MCF 10A (cell line): ENCODE measurements at regions of chr3 and their contacts with region 1.

Region 1: GRCh38 chr3:15205934-15206661 is at the start of gene CAPN7:
- DNase-seq: peak; percentile 93
- H3K4me3 Mint-ChIP-seq: peak within 1 kb of the TSS; percentile 81
- H3K27ac Mint-ChIP-seq: peak within 1 kb of the TSS; percentile 91
- H3K4me1 Mint-ChIP-seq: peaks cover 13% of the 10 kb centered on the region
- H3K27me3 Mint-ChIP-seq: no peaks in the 10 kb centered on the region
- CTCF ChIP-seq: no peak
- total RNA-seq, gene CAPN7: 48.4 and 55.2 TPM in 2 replicates

Region 2: GRCh38 chr3:15056676-15057404 is 149.3 kb before region 1 on chr3:
- CTCF ChIA-PET with region 1: no interaction called
- POLR2A ChIA-PET with region 1: no interaction called
- intact Hi-C with region 1: no loop called
- DNase-seq: no peak
- H3K4me3 Mint-ChIP-seq: no peak overlapping the region
- H3K27ac Mint-ChIP-seq: no peak overlapping the region
- H3K4me1 Mint-ChIP-seq: peaks cover 6% of the 10 kb centered on the region
- H3K27me3 Mint-ChIP-seq: no peaks in the 10 kb centered on the region
- CTCF ChIP-seq: no peak

Region 3: GRCh38 chr3:15098503-15099363 is 107.4 kb before region 1 on chr3 and contains the start of gene RBSN:
- CTCF ChIA-PET with region 1: interaction called, 121 read pairs
- POLR2A ChIA-PET with region 1: interaction called, 47 read pairs
- intact Hi-C with region 1: no loop called
- DNase-seq: peak; percentile 94
- H3K4me3 Mint-ChIP-seq: peak within 1 kb of the TSS; percentile 84
- H3K27ac Mint-ChIP-seq: peak within 1 kb of the TSS; percentile 82
- H3K4me1 Mint-ChIP-seq: peaks cover 30% of the 10 kb centered on the region
- H3K27me3 Mint-ChIP-seq: no peaks in the 10 kb centered on the region
- CTCF ChIP-seq: no peak
- total RNA-seq, gene RBSN: 37.7 and 39.6 TPM in 2 replicates

Region 4: DNA sequence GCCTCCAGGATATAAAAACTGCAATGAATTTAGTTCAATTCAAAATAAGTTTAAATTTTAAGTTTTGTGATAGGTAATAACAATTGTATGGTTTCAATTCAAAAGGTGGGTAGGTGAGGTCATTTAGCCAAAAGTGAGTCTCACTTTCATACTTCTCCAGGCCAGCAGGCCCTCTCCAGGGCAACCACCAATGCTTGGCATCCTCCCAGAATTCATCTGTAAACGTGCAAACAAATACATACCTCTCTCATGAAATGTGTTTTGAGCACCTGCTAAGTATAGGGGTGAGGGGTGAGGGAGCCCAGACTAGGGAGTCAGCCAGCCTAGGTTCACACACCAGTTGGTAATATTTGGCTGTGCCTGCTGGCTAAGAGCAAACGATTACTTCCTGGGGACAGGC is 85.1 kb before region 1 on chr3:
- CTCF ChIA-PET with region 1: interaction called, 77 read pairs
- POLR2A ChIA-PET with region 1: interaction called, 6 read pairs
- intact Hi-C with region 1: no loop called
- DNase-seq: no peak
- H3K4me3 Mint-ChIP-seq: no peak overlapping the region
- H3K27ac Mint-ChIP-seq: no peak overlapping the region
- H3K4me1 Mint-ChIP-seq: no peaks in the 10 kb centered on the region
- H3K27me3 Mint-ChIP-seq: no peaks in the 10 kb centered on the region
- CTCF ChIP-seq: no peak

Region 5: DNA sequence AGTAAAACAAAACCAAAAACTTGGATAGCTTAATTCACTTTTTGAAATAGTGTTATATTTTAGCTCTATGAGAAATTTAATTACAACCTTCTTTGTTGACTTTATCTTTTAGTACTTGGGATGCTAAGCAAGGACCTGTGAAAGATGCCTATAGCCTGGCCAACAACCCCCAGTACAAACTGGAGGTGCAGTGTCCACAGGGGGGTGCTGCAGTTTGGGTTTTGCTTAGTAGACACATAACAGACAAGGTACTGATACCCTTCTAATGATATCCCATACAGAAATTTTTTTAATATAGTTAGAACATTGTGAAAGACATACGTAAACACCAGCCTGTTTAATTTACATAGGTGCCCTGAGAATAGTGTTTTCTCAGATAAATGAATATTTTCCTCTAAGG is 35.2 kb after region 1 on chr3:
- CTCF ChIA-PET with region 1: interaction called, 4 read pairs
- POLR2A ChIA-PET with region 1: interaction called, 13 read pairs
- intact Hi-C with region 1: no loop called
- DNase-seq: no peak
- H3K4me3 Mint-ChIP-seq: no peak overlapping the region
- H3K27ac Mint-ChIP-seq: no peak overlapping the region
- H3K4me1 Mint-ChIP-seq: no peaks in the 10 kb centered on the region
- H3K27me3 Mint-ChIP-seq: no peaks in the 10 kb centered on the region
- CTCF ChIP-seq: peak; percentile 23

Region 6: GRCh38 chr3:15405448-15406050 is 199.5 kb after region 1 on chr3:
- CTCF ChIA-PET with region 1: interaction called, 18 read pairs
- POLR2A ChIA-PET with region 1: no interaction called
- intact Hi-C with region 1: loop called (anchors 1 kb)
- DNase-seq: peak; percentile 59
- H3K4me3 Mint-ChIP-seq: no peak overlapping the region
- H3K27ac Mint-ChIP-seq: no peak overlapping the region
- H3K4me1 Mint-ChIP-seq: no peaks in the 10 kb centered on the region
- H3K27me3 Mint-ChIP-seq: no peaks in the 10 kb centered on the region
- CTCF ChIP-seq: peak; percentile 57

Region 7: DNA sequence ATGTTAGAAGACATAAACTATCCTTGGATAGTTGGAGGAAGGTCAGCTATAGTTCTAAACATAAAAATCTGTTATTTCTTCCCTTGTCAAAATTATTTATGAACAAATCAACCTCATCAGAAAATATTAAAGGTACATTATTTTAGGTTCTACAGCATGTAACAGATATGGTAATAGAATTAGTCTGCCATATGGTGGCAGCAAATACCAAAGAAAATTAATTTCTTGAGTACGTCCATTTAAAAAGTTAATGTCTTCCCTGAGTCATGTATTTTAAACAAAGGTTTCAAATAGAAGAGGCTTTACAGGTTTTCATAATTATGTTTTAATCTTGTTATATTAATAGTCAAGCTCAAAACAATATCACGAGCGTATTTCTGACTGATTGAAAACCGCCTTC is 609.6 kb after region 1 on chr3:
- CTCF ChIA-PET with region 1: interaction called, 5 read pairs
- POLR2A ChIA-PET with region 1: no interaction called
- intact Hi-C with region 1: loop called (anchors 10 kb)
- DNase-seq: peak; percentile 68
- H3K4me3 Mint-ChIP-seq: no peak overlapping the region
- H3K27ac Mint-ChIP-seq: peak overlapping the region; percentile 27
- H3K4me1 Mint-ChIP-seq: peaks cover 18% of the 10 kb centered on the region
- H3K27me3 Mint-ChIP-seq: no peaks in the 10 kb centered on the region
- CTCF ChIP-seq: peak; percentile 43